ENCODE measurements at regions of chr3 and their contacts with region 1.

Region 1: GRCh38 chr3:158109804-158110657 is at the start of gene RSRC1:
- H3K4me3 Mint-ChIP-seq: peak within 1 kb of the TSS; percentile 93
- H3K27ac Mint-ChIP-seq: peak within 1 kb of the TSS; percentile 93
- H3K4me1 Mint-ChIP-seq: peaks cover 57% of the 10 kb centered on the region
- H3K27me3 Mint-ChIP-seq: peaks cover 43% of the 10 kb centered on the region

Region 2: DNA sequence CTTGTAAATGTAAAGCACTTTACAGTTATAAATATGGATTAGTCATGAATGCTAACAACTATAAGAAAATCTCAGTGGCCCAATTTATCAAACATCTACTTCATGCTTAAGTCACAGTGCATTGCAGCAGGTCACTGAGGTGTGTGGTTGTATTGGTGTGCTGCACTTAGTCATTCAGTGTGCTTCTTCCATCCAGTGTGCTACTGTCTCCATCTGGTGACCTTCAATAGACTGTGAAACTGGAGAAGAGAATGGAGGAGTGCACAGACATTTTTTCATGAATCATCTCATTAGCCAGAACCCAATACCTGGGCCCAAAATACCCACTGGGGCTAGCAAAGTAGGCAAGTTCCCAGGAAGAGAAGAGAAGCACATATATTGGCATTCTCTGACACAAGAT is 203.4 kb before region 1 on chr3:
- intact Hi-C with region 1: no loop called
- H3K4me3 Mint-ChIP-seq: no peak overlapping the region
- H3K27ac Mint-ChIP-seq: no peak overlapping the region
- H3K4me1 Mint-ChIP-seq: no peaks in the 10 kb centered on the region
- H3K27me3 Mint-ChIP-seq: no peaks in the 10 kb centered on the region

Region 3: DNA sequence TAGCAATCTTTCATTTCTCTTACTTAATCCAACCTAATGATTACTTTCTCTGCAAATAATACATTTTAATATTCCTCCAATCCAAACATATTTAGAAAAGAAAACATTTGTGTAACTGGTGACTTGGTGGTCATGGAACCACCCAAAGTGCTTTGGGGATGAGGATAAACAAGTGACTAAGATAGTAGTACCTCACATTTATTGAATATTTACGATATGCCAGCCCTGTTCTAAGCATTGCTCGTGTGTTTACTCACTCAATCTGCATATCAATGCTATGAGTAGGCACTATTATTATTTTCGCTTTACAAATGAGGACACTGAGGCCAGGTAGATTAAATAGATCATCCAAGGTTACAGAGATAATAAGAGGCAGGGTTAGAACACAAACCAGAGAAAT is 193.4 kb before region 1 on chr3:
- intact Hi-C with region 1: no loop called
- H3K4me3 Mint-ChIP-seq: no peak overlapping the region
- H3K27ac Mint-ChIP-seq: no peak overlapping the region
- H3K4me1 Mint-ChIP-seq: no peaks in the 10 kb centered on the region
- H3K27me3 Mint-ChIP-seq: no peaks in the 10 kb centered on the region

Region 4: GRCh38 chr3:158167737-158168471 is 57.9 kb after region 1 on chr3:
- intact Hi-C with region 1: loop called (anchors 5 kb)
- H3K4me3 Mint-ChIP-seq: no peak overlapping the region
- H3K27ac Mint-ChIP-seq: peak overlapping the region; percentile 17
- H3K4me1 Mint-ChIP-seq: peaks cover 18% of the 10 kb centered on the region
- H3K27me3 Mint-ChIP-seq: no peaks in the 10 kb centered on the region

Region 5: DNA sequence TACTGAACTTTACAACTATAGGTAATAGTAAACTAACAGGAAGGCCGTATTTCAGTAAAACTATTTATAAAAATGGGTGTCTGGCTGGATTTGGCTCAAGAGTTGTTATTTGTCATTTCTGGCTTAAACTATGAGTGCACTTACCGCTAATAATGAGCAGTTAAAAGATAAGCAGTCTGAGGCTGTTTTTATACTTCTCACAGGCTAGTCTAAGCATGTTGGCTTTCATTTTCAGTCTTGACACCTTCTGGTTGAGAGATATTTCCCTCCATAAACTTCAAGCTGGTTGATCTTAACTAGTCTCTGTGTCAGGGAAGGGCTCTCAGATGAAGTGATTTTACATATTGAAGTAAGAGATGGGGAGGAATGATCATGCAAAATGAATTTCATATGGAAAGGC is 96.0 kb after region 1 on chr3:
- intact Hi-C with region 1: no loop called
- H3K4me3 Mint-ChIP-seq: no peak overlapping the region
- H3K27ac Mint-ChIP-seq: no peak overlapping the region
- H3K4me1 Mint-ChIP-seq: no peaks in the 10 kb centered on the region
- H3K27me3 Mint-ChIP-seq: no peaks in the 10 kb centered on the region

Measured in dendritic cell treated with granulocyte-macrophage colony-stimulating factor and Interleukin-4, amounts not matched to agents 40 ng/mL and 50 ng/mL, for 4 days (primary cell).